ENCODE measurements at regions of chr2 and their contacts with region 1.

Region 1: GRCh38 chr2:9975805-9976447 is 24.4 kb downstream of the GRHL1 start:
- DNase-seq: peak; percentile 99
- ATAC-seq: peak; percentile 77
- H3K4me3 ChIP-seq: peak overlapping the region; percentile 16; the same call in 1 of the 2 replicates
- H3K27ac ChIP-seq: peak overlapping the region; percentile 88
- H3K4me1 ChIP-seq: peaks cover 59% of the 10 kb centered on the region
- H3K27me3 ChIP-seq: no peaks in the 10 kb centered on the region
- CTCF ChIP-seq: no peak

Region 2: GRCh38 chr2:9843229-9844035 is 132.5 kb before region 1 on chr2 and contains the start of gene TAF1B:
- CTCF ChIA-PET with region 1: interaction called, 3 read pairs
- POLR2A ChIA-PET with region 1: no interaction called
- intact Hi-C with region 1: loop called (anchors 2 kb)
- DNase-seq: peak; percentile 96
- ATAC-seq: peak; percentile 78
- H3K4me3 ChIP-seq: peak within 1 kb of the TSS; percentile 75
- H3K27ac ChIP-seq: peak within 1 kb of the TSS; percentile 88
- H3K4me1 ChIP-seq: peaks cover 35% of the 10 kb centered on the region
- H3K27me3 ChIP-seq: no peaks in the 10 kb centered on the region
- CTCF ChIP-seq: 0 out of 2 replicates have a peak, but pooled peaks have one; percentile 30
- total RNA-seq, gene TAF1B: 24.1 and 39.5 TPM in 2 replicates

Region 3: GRCh38 chr2:9897331-9897737 is 78.6 kb before region 1 on chr2:
- CTCF ChIA-PET with region 1: no interaction called
- POLR2A ChIA-PET with region 1: no interaction called
- intact Hi-C with region 1: loop called (anchors 5 kb)
- DNase-seq: peak; percentile 99
- ATAC-seq: peak; percentile 93
- H3K4me3 ChIP-seq: no peak overlapping the region
- H3K27ac ChIP-seq: peak overlapping the region; percentile 25
- H3K4me1 ChIP-seq: peaks cover 27% of the 10 kb centered on the region
- H3K27me3 ChIP-seq: no peaks in the 10 kb centered on the region
- CTCF ChIP-seq: no peak

Region 4: DNA sequence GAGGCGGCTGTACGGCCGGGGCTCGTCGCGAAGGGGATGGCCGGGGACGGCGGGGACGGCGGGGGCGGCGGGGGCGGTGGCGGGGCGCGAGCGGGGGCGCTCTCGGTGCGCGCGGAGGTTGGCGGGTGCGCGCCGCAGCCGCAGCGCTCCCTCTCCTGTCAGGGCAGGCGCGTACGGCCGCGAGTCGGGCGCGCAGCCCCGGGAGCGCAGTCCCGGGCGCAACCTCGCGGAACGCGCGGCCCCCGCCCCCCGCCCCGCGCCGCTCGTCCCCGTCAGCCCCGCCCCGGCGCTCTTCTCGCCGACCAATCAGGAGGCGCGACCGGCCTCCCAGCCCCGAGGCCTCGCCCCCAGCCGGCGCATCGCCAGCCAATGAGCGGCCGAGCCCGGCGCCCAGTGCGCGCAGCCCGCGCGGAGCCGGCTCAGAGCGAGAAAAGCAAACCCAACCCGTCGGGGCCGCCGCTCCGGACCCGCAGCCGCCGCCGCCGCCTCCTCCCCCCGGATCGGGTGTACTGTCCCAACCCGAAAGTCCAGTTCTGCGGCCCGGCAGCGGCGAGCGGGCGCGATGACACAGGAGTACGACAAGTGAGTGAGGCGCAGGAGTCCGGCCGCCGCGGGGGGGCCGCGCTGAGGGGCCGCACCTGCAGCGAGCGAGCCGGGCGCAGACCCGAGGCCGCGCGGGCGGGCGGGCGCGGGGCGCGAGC is 24.5 kb before region 1 on chr2 and contains the start of gene GRHL1:
- CTCF ChIA-PET with region 1: interaction called, 5 read pairs
- POLR2A ChIA-PET with region 1: no interaction called
- intact Hi-C with region 1: loop called (anchors 2 kb)
- DNase-seq: peak; percentile 95
- ATAC-seq: peak; percentile 83
- H3K4me3 ChIP-seq: peak within 1 kb of the TSS; percentile 76
- H3K27ac ChIP-seq: no peak within 1 kb of the TSS
- H3K4me1 ChIP-seq: peaks cover 29% of the 10 kb centered on the region
- H3K27me3 ChIP-seq: no peaks in the 10 kb centered on the region
- CTCF ChIP-seq: no peak
- total RNA-seq, gene GRHL1: 9.3 and 10.3 TPM in 2 replicates

Region 5: DNA sequence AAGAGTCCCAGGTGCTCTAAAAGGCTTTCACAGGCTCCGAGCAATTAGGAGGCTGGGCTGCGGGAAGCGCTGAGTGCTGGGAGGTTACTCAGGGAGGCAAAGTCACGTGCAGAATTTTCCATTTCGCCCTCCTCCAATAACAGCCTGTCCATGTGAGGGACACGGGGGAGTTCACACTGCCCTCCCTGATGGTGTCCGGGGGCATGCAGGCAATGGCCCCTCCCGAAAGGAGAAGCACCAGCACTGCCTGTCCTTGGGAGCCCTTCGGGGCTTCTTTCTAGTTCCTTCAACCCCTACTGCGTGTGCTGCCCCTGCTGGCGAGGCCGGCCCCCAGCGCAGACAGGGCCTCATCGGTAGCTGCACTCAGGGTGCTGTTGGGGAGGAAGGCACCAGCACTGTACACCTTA is 263.6 kb after region 1 on chr2:
- CTCF ChIA-PET with region 1: no interaction called
- POLR2A ChIA-PET with region 1: no interaction called
- intact Hi-C with region 1: no loop called
- DNase-seq: no peak
- ATAC-seq: no peak
- H3K4me3 ChIP-seq: no peak overlapping the region
- H3K27ac ChIP-seq: no peak overlapping the region
- H3K4me1 ChIP-seq: no peaks in the 10 kb centered on the region
- H3K27me3 ChIP-seq: no peaks in the 10 kb centered on the region
- CTCF ChIP-seq: no peak